Right ventricle myocardium superior (tissue), 1 donor: ENCODE measurements at regions of chr22 and their contacts with region 1.

Region 1: DNA sequence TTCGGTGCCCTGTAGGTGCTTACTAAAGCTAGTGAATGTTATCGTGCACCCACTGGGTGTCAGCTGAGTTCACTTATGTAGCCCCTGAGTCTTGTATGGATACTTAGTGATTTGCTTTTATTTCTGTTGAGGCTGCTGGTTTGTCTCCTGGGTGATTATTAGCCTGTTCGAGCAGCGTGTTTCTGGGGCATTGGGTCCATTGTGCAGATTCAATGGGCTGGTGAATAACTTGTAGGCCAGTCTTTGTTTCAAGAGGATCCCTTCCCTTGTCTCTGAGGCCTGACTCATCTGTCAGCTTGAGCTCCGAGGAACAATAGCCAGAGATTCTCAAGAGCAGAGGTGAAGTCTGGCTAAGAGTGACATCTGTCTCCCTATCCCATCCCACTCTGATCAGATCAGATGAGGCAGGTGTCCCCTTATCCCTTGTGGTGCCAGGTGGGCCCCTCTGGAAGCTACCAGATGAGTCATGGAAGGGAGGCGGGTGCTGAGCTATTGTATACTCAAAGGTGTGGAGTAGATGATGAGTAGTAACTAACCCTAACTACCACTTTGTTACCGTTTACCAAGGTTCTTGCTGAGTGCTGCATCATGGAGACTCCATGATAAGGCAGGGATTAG is 3.7 kb downstream of the MIAT start:
- DNase-seq: no peak
- ATAC-seq: no peak

Region 2: GRCh38 chr22:26404851-26405421 is 256.1 kb before region 1 on chr22:
- intact Hi-C with region 1: loop called (anchors 5 kb)
- DNase-seq: no peak
- ATAC-seq: peak; percentile 43

Region 3: GRCh38 chr22:26563022-26563421 is 98.0 kb before region 1 on chr22:
- intact Hi-C with region 1: no loop called
- DNase-seq: no peak
- ATAC-seq: no peak

Region 4: GRCh38 chr22:26585104-26585790 is 75.8 kb before region 1 on chr22:
- intact Hi-C with region 1: no loop called
- DNase-seq: peak; percentile 91
- ATAC-seq: peak; percentile 55

Region 5: DNA sequence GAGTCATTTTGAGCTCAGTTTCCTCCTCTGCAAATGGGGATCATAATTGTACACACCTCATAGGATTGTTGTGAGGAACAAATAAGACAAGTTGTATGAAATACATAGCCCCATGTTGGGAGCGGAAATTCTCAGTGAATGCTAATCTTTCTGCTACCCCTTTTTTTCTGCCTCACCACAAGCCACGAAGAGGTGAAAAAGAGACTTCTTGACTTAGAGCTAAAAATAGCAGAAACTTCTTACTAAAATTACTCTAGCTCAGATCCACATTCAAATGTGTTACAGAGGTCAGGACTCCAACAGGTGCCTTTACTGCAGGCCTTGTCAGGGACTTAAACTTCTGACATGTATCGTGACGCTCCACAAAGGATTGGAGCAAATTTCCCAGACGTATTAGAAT is 124.9 kb after region 1 on chr22:
- intact Hi-C with region 1: no loop called
- DNase-seq: no peak
- ATAC-seq: no peak